GM13976 (cell line): ENCODE measurements at regions of chr21 and their contacts with region 1.

Region 1: DNA sequence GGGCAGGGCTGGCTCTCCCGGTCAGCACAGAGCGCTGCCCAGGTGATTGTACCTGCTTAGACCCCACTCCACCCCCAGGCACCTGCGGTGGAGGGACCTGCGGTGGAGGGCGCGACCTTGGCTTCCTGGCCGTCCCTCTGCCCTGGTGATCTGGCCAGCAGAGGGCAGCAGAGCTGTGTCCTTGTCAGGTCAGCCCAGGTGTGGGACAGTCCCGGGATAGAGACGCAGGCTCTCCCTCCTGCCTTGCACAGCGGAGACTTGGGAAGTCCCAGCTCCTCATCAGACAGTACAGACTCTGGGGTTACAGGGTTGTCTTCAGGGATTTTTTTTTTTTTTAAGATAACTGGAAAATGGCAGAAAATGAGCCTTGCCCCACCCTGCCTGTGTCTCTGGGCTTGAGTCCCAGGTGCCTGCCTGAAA is 10.0 kb downstream of the SLX9 start:
- DNase-seq: peak; percentile 91
- CTCF ChIP-seq: peak; percentile 95

Region 2: GRCh38 chr21:45287438-45288391 is 337.9 kb after region 1 on chr21 and contains the start of gene POFUT2:
- in situ Hi-C with region 1: loop called (anchors 25 kb)
- DNase-seq: peak; percentile 100
- CTCF ChIP-seq: no peak

Region 3: DNA sequence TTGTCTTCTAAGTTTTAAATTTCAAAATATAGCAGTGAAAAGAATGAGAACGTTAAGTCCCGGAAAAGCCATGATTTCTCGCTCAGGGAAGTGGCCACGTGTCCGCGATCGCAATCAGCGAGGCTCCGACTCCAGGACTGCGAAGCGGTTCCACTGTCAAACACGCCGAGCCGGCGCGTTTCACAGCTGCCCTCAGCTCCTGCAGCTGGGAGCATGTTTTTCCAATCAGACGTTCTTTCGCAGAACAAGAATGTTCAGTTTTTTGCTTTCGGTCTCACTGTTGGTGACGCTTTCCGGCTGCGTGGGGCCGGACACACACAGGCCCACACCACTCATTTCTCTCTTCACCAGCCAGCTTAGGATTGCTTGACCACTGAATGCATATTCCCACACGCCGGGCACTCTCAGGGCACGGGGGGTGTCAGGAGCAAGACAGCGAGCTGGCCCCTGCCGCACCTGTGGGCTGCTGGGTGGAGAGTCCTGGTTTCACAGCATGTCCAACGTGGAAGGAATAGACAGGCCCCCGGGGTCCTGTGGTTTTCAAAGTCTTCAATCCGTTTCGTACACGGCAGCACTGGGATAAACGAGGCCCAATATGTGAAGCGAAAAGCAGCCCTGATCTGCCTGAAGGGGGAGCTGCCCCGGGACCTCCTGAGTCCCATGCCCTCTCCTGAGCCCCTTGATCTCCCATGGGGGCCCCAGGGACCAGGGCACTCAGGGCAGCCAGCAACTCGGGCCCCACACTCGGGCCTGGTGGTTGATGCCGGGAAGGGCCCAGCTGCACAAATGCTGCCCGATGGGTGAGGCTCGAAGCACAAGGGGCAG is 407.9 kb after region 1 on chr21:
- in situ Hi-C with region 1: no loop called
- DNase-seq: no peak
- CTCF ChIP-seq: no peak